HEK293 (cell line): ENCODE measurements at regions of chr14 and their contacts with region 1.

Region 1: GRCh38 chr14:64303471-64303917 is 9.3 kb upstream of the ESR2 start:
- H3K4me3 ChIP-seq: no peak overlapping the region
- H3K27ac ChIP-seq: no peak overlapping the region
- H3K4me1 ChIP-seq: no peaks in the 10 kb centered on the region
- CTCF ChIP-seq: 0 out of 2 replicates have a peak, but pooled peaks have one; percentile 48

Region 2: DNA sequence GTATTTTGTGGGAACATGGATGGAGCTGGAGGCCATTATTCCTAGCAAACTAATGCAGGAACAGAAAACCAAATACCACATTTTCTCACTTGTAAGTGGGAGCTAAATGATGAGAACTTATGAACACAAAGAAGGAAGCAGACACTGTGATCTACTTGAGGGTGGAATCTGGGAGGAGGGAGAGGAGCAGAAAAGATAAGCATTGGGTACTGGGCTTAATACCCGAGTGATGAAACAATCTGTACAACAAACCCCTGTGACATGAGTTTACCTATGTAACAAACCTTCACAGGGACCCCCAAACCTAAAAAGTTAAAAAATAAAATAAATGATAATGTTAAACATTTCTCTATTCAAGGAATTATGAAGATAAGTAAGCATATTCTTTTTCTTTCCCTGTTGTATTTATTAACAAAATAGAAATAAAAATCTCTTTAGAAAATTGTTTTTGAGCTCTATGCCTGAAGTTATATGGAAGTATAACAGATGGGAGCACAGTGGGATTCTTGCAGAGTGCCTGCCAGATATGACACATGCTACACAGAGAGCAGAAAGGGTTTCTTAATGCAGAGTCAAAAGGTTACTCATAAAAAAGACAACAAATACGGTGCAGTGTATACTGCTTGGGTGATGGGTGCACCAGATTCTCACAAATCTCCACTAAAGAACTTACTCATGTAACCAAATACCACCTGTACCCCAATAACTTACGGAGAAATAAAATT is 502.7 kb before region 1 on chr14:
- CTCF ChIA-PET with region 1: interaction called, 26 read pairs
- POLR2A ChIA-PET with region 1: no interaction called
- H3K4me3 ChIP-seq: no peak overlapping the region
- H3K27ac ChIP-seq: no peak overlapping the region
- H3K4me1 ChIP-seq: no peaks in the 10 kb centered on the region; the same call in 1 of the 2 replicates
- CTCF ChIP-seq: no peak

Region 3: GRCh38 chr14:64218344-64219240 is 84.9 kb before region 1 on chr14:
- CTCF ChIA-PET with region 1: no interaction called
- POLR2A ChIA-PET with region 1: no interaction called
- H3K4me3 ChIP-seq: no peak overlapping the region
- H3K27ac ChIP-seq: no peak overlapping the region
- H3K4me1 ChIP-seq: no peaks in the 10 kb centered on the region
- CTCF ChIP-seq: no peak

Region 4: GRCh38 chr14:64349741-64350490 is 46.4 kb after region 1 on chr14:
- CTCF ChIA-PET with region 1: no interaction called
- POLR2A ChIA-PET with region 1: no interaction called
- H3K4me3 ChIP-seq: no peak overlapping the region
- H3K27ac ChIP-seq: no peak overlapping the region
- H3K4me1 ChIP-seq: no peaks in the 10 kb centered on the region
- CTCF ChIP-seq: no peak